Posterior cingulate gyrus (tissue), 11 donors: ENCODE measurements at regions of chr6 and their contacts with region 1.

Region 1: GRCh38 chr6:1381481-1382330 is 7.7 kb upstream of the FOXF2 start:
- DNase-seq: peak in 7 of 10 donors; percentile 53 to 94 (median 71)

Region 2: GRCh38 chr6:593139-593906 is 788.4 kb before region 1 on chr6:
- intact Hi-C with region 1: loop called (anchors 5 kb)
- DNase-seq: peak in 4 of 10 donors; percentile 27 to 55 (median 40)

Region 3: GRCh38 chr6:722077-722524 is 659.6 kb before region 1 on chr6:
- intact Hi-C with region 1: loop called (anchors 10 kb)
- DNase-seq: peak; percentile 36 to 95 (median 78)

Region 4: DNA sequence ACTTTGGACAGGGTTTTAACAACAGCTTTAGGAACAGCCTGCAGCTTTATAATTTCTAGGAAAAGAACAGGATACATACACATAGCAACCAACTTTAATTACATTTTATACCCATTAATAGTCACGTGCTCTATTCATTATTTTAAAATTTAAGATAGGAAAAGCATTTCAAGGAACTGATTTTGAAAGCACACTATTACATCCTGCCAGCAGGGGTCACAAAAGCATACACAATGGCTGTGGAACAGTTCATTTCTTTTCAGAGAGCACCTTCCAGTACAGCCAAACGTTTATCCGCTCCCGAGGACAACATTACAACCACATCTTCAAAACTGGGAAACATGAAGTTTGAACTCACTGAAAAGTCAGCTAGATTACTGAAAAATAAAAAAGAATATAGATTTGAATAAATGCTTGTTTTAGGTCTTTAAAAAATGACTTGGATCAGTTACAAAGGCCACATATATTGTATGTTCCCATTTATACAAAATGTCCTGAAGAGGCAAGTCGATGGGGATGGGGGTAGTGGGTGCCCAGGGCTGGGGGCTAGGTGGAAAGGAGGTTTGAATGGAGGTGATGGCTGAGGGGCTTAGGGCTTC is 584.1 kb before region 1 on chr6:
- intact Hi-C with region 1: loop called (anchors 1 kb)
- DNase-seq: peak in 3 of 10 donors; percentile 23 to 39 (median 25)

Region 5: GRCh38 chr6:1110164-1110563 is 271.5 kb before region 1 on chr6:
- intact Hi-C with region 1: no loop called
- DNase-seq: peak in 1 of 10 donors; percentile 15

Region 6: DNA sequence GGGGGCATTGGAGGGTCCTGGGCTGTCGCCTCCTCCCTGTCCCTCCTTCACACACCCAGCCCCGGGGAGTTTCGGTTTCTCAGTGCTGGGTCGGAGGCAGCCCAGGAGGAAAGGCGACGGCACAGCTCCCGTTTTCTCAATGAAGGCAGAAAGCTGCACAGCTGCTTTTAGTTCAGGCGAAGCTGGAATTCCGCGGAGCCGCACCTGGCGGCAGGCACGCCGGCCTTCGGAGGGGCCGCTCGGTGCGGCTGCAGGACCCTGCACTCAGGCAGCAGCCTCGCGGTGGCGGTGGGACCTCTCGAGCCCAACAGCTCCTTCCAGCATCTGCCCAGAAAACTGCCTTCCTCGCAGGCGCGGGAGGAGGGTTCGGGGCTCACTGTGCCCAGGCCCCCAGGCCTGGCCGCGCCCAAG is 65.2 kb before region 1 on chr6:
- intact Hi-C with region 1: no loop called
- DNase-seq: peak in 3 of 10 donors; percentile 67 to 82 (median 76)